A549 (cell line): ENCODE measurements at regions of chr15 and their contacts with region 1.

Region 1: DNA sequence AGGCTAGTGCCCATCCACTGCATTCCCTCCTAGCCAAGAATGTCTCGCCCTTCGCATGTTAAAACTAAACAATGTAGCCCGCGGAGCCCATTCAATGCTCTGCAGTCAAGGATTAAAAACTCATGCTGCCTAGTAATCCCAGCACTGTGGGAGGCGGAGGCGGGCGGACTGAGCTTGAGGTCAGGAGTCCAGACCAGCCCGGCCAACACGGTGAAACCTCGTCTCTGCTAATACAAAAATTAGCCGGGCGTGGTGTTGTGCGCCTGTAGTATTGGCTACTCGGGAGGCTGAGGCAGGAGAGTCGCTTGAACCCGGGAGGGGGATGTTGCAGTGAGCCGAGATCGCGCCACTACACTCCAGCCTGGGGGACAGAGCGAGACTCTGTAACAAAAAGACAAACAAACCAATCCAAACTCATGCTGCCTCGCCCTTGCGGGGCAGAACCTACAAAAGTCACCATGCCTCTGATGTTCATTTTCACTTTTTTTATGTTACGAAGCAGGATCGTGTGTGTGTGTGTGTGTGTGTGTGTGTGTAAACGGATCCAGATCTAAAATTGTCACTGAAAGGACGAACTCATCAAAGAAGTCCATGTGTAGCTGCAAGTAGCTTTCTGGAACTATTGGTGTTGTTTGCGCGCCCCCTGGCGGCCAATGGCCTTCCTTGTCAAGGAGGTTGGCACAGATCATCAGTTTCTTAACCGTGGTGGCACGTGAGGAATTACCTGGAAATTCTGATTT is 54.8 kb upstream of the SPESP1 start:
- DNase-seq: peak; percentile 91 to 92
- ATAC-seq: peak; percentile 87 to 96
- H3K4me3 ChIP-seq: peak overlapping the region; percentile 17; the same call in 2 of the 3 replicates
- H3K27ac ChIP-seq: no peak overlapping the region
- H3K4me1 ChIP-seq: no peaks in the 10 kb centered on the region; the same call in 2 of the 3 replicates
- CTCF ChIP-seq: peak; percentile 99
- EP300 ChIP-seq: no peak
- POLR2A ChIP-seq: no peak
- RAD21 ChIP-seq: peak; percentile 98 to 99

Region 2: DNA sequence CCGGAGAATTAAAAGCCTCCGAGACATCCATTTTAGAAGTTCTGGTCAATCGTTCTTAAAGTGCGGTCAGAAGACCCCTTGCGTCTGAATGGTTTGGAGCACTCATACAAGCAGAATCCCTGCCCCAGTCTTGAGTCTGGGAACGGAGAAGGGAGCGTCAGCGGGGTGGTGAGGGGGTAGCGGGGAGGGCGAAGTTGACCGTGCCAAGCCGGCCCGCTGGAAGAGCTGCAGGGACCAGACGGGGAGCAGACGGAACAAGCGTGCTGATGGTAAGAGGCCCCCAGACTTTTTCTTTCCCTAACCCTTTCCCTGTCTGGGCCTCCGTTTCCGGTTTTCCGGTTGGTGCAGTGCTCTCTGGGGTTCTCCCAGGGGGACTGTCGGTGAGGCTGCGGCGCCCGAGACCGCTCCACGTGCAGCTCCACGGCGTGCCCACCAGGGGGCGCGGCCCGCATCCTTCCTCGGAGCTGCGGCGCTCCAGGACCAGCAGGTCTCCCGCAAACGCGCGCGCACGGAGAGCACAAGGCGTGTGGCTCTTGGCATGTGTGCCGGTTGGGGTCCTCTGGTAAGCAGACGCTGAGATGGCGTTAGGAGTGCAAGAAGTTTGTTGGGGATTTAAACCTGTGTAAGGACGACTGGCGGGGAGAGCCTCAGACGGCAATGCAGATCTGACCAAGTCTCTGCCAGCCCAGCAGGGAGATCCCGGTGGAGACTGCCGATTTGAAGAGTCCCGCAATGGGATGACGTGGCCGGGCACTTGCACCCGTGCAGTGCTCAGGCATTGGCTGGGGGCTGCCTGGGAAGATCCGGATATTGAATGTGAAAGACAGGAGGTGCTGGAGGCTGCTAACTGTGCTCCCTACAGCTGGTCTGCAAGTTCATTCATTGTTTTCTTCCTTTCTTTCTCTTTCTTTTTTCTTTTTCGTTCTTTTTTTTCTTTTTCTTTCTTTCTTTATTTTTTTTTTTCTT is 315.9 kb before region 1 on chr15:
- CTCF ChIA-PET with region 1: interaction called, 70 read pairs
- POLR2A ChIA-PET with region 1: no interaction called
- DNase-seq: peak; percentile 84 to 91
- ATAC-seq: peak; percentile 90 to 96
- H3K4me3 ChIP-seq: peak overlapping the region; percentile 43
- H3K27ac ChIP-seq: peak overlapping the region; percentile 41 to 73; a peak in 5 of 6 replicates
- H3K4me1 ChIP-seq: no peaks in the 10 kb centered on the region
- CTCF ChIP-seq: peak; percentile 97
- EP300 ChIP-seq: no peak
- POLR2A ChIP-seq: no peak
- RAD21 ChIP-seq: peak; percentile 85 to 91

Region 3: DNA sequence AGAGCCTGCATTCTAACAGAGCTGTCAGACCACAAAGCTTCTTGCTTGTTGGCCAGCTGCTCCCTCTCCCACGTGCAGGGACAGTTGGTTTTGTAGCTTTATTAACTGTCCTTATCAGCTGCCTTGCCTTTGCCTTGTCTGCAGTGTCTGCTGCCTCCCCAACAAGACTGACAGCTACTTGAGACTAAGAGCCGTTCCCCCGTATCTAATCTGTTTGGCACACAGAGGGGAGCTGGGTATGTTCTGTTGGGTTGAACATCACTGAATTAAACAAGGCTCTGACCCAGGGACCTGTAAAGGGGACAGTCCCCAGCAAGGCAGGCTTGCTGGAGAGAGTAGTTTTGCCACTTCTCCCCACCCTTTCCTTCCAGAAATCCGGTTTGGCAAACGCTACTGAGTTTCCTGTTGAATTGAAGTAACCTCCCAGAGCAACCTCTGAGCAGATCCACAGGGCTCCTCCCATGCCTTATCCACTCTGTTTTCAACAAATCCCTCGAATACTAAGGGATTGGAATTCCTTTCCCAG is 171.0 kb before region 1 on chr15:
- CTCF ChIA-PET with region 1: interaction called, 14 read pairs
- POLR2A ChIA-PET with region 1: no interaction called
- DNase-seq: no peak
- ATAC-seq: no peak
- H3K4me3 ChIP-seq: no peak overlapping the region
- H3K27ac ChIP-seq: no peak overlapping the region
- H3K4me1 ChIP-seq: no peaks in the 10 kb centered on the region
- CTCF ChIP-seq: no peak
- EP300 ChIP-seq: no peak
- POLR2A ChIP-seq: no peak
- RAD21 ChIP-seq: no peak

Region 4: GRCh38 chr15:68755731-68756130 is 119.8 kb before region 1 on chr15:
- CTCF ChIA-PET with region 1: interaction called, 19 read pairs
- POLR2A ChIA-PET with region 1: no interaction called
- DNase-seq: no peak
- ATAC-seq: no peak
- H3K4me3 ChIP-seq: no peak overlapping the region
- H3K27ac ChIP-seq: no peak overlapping the region
- H3K4me1 ChIP-seq: no peaks in the 10 kb centered on the region
- CTCF ChIP-seq: no peak
- EP300 ChIP-seq: no peak
- POLR2A ChIP-seq: no peak
- RAD21 ChIP-seq: no peak

Region 5: GRCh38 chr15:68795298-68795848 is 80.2 kb before region 1 on chr15:
- CTCF ChIA-PET with region 1: interaction called, 20 read pairs
- POLR2A ChIA-PET with region 1: no interaction called
- DNase-seq: no peak
- ATAC-seq: no peak
- H3K4me3 ChIP-seq: no peak overlapping the region
- H3K27ac ChIP-seq: no peak overlapping the region
- H3K4me1 ChIP-seq: peaks cover 26% of the 10 kb centered on the region; the same call in 1 of the 3 replicates
- CTCF ChIP-seq: no peak
- EP300 ChIP-seq: no peak
- POLR2A ChIP-seq: no peak
- RAD21 ChIP-seq: no peak

Region 6: GRCh38 chr15:68852461-68852860 is 23.1 kb before region 1 on chr15:
- CTCF ChIA-PET with region 1: interaction called, 14 read pairs
- POLR2A ChIA-PET with region 1: no interaction called
- DNase-seq: no peak
- ATAC-seq: no peak
- H3K4me3 ChIP-seq: no peak overlapping the region
- H3K27ac ChIP-seq: no peak overlapping the region
- H3K4me1 ChIP-seq: no peaks in the 10 kb centered on the region
- CTCF ChIP-seq: no peak
- EP300 ChIP-seq: no peak
- POLR2A ChIP-seq: no peak
- RAD21 ChIP-seq: no peak

Region 7: DNA sequence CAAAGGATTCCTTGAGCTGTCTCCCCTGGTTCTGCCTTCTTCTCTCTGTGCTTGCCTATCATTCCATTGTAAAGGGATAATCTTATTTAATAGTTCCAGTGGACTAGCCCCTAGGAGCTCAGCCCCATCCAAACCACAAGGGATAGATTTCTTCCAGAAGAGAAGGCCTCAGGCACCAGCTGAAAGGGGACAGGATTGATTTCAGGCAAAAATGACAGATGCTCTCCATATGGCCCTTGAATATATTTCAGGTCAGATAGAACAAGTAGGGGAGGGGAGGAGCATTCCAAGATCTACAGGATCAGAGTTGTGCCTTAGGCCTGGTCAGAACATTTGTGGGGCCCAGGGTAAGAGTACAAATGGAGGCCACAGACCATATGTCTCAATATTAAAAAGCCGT is 662.4 kb after region 1 on chr15:
- CTCF ChIA-PET with region 1: no interaction called
- POLR2A ChIA-PET with region 1: no interaction called
- DNase-seq: no peak
- ATAC-seq: no peak
- H3K4me3 ChIP-seq: no peak overlapping the region
- H3K27ac ChIP-seq: no peak overlapping the region
- H3K4me1 ChIP-seq: no peaks in the 10 kb centered on the region
- CTCF ChIP-seq: no peak
- EP300 ChIP-seq: no peak
- POLR2A ChIP-seq: no peak
- RAD21 ChIP-seq: no peak